Activated CD4-positive, alpha-beta memory T cell treated with anti-CD3 and anti-CD28 coated beads, Interleukin-2, amount 10 ng/mL, durations not matched to agents 7 days and 5 days (primary cell): ENCODE measurements at regions of chr6 and their contacts with region 1.

Region 1: GRCh38 chr6:89940225-89941027 is 46.2 kb downstream of the GJA10 start:
- DNase-seq: peak; percentile 80
- H3K4me3 Mint-ChIP-seq: no peak overlapping the region
- H3K27ac Mint-ChIP-seq: no peak overlapping the region
- H3K4me1 Mint-ChIP-seq: peaks cover 22% of the 10 kb centered on the region
- H3K27me3 Mint-ChIP-seq: no peaks in the 10 kb centered on the region

Region 2: GRCh38 chr6:89566930-89567629 is 373.3 kb before region 1 on chr6:
- CTCF ChIA-PET with region 1: no interaction called
- POLR2A ChIA-PET with region 1: no interaction called
- DNase-seq: no peak
- H3K4me3 Mint-ChIP-seq: no peak overlapping the region
- H3K27ac Mint-ChIP-seq: no peak overlapping the region
- H3K4me1 Mint-ChIP-seq: no peaks in the 10 kb centered on the region
- H3K27me3 Mint-ChIP-seq: peaks cover 3% of the 10 kb centered on the region

Region 3: DNA sequence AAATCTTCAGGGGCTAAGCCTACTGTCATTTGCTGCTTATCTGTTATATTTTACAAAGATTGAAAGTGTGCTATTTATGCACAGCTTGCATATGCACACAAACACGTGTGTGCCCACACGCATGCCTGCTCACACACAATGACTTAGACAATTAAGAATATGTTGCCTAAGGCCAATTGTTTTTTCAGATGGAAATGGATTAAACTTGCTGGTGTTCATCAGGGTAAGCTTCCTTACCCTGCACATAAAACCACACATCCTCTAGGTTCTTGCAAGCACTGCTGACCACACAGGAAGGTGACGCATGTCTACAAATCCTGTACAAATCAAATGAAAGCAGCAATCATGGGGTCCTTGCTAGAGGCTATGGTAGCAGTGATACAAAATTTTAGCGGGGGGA is 12.3 kb after region 1 on chr6:
- CTCF ChIA-PET with region 1: interaction called, 49 read pairs
- POLR2A ChIA-PET with region 1: interaction called, 5 read pairs
- DNase-seq: peak; percentile 73
- H3K4me3 Mint-ChIP-seq: peak overlapping the region; percentile 46
- H3K27ac Mint-ChIP-seq: peak overlapping the region; percentile 74
- H3K4me1 Mint-ChIP-seq: peaks cover 64% of the 10 kb centered on the region
- H3K27me3 Mint-ChIP-seq: no peaks in the 10 kb centered on the region

Region 4: DNA sequence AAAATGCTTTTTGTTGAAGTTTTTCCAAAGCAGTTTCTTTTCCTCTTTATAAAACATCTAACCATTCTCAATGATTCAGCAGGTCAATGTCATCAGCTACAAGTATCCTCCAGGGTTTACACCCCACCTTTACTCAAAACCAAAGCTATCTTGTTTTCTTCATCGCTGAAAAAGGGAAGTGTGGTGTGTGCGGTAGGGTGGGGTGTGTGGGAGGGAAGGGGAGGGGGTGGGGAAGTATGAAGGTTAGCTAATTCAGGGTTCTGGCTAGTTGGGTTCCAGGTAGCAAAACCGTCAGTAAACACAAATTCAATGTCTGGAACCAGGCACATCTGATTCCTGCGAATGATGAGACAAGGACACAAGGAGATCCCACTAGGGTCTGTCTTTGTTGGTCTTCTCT is 143.5 kb after region 1 on chr6:
- CTCF ChIA-PET with region 1: interaction called, 13 read pairs
- POLR2A ChIA-PET with region 1: no interaction called
- DNase-seq: peak; percentile 71
- H3K4me3 Mint-ChIP-seq: peak overlapping the region; percentile 43
- H3K27ac Mint-ChIP-seq: peak overlapping the region; percentile 64
- H3K4me1 Mint-ChIP-seq: peaks cover 75% of the 10 kb centered on the region
- H3K27me3 Mint-ChIP-seq: peaks cover 35% of the 10 kb centered on the region

Region 5: GRCh38 chr6:90179190-90180169 is 239.1 kb after region 1 on chr6:
- CTCF ChIA-PET with region 1: interaction called, 46 read pairs
- POLR2A ChIA-PET with region 1: interaction called, 3 read pairs
- DNase-seq: no peak
- H3K4me3 Mint-ChIP-seq: no peak overlapping the region
- H3K27ac Mint-ChIP-seq: no peak overlapping the region
- H3K4me1 Mint-ChIP-seq: peaks cover 51% of the 10 kb centered on the region
- H3K27me3 Mint-ChIP-seq: peaks cover 2% of the 10 kb centered on the region

Region 6: GRCh38 chr6:90296346-90297114 is 356.1 kb after region 1 on chr6 and contains the start of gene BACH2:
- CTCF ChIA-PET with region 1: interaction called, 12 read pairs
- POLR2A ChIA-PET with region 1: no interaction called
- DNase-seq: peak; percentile 95
- H3K4me3 Mint-ChIP-seq: peak within 1 kb of the TSS; percentile 87
- H3K27ac Mint-ChIP-seq: peak within 1 kb of the TSS; percentile 82
- H3K4me1 Mint-ChIP-seq: peaks cover 27% of the 10 kb centered on the region
- H3K27me3 Mint-ChIP-seq: peaks cover 44% of the 10 kb centered on the region
- total RNA-seq, gene BACH2: 30.3 to 31.1 TPM

Region 7: DNA sequence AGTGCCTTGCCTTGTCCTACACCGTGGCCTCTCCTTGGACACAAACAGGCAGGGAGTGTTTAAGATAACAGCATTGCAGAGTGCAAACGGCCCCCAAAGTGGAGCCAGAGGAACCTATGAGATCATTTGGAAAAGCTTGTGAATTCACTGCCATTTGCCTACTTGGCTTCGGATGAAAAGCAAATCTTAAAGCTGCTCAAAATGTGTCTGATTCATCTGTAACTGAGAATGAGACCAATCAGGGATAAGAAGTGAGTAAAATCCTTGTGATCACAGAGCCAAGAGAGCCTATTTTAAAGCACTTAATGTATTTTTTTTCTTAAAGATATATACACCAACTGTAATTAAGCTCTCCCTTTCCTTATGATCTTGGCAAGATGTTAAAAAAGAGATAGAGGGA is 421.9 kb after region 1 on chr6:
- CTCF ChIA-PET with region 1: no interaction called
- POLR2A ChIA-PET with region 1: no interaction called
- DNase-seq: no peak
- H3K4me3 Mint-ChIP-seq: no peak overlapping the region
- H3K27ac Mint-ChIP-seq: no peak overlapping the region
- H3K4me1 Mint-ChIP-seq: no peaks in the 10 kb centered on the region
- H3K27me3 Mint-ChIP-seq: peaks cover 15% of the 10 kb centered on the region